Right ventricle myocardium inferior (tissue), 1 donor: ENCODE measurements at regions of chr9 and their contacts with region 1.

Region 1: GRCh38 chr9:132575005-132575609 is 7.3 kb upstream of the BARHL1 start:
- DNase-seq: no peak
- ATAC-seq: peak; percentile 69

Region 2: DNA sequence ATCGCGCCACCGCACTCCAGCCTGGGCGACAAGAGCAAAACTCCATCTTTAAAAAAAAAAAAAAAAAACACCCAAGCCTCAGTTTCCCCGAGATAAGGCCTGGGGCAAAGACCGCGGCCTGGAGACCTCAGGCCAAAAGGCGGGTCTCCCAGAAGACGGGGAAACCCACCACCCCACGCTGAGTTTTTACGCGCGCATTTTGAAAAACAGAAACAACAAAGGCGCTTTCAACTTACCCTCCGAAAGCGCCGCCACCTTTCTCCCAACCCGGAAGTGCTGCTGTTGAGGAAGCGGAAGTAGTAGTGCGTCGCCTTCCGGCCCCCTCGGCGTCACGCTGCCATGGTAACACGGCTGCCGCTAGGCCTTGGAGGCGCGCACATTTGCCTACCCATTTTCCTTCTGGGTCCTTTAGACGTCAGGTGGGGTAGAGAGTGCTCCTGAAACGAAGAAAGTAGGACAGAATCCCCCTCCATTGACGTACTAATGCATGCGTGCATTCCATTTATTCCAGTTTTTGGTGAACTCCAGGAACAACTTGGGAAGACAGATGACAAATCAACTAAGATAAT is 168.5 kb before region 1 on chr9 and contains the start of gene TTF1:
- intact Hi-C with region 1: loop called (anchors 2 kb)
- DNase-seq: peak; percentile 95
- ATAC-seq: peak; percentile 77
- total RNA-seq, gene TTF1: 17.2 TPM

Region 3: DNA sequence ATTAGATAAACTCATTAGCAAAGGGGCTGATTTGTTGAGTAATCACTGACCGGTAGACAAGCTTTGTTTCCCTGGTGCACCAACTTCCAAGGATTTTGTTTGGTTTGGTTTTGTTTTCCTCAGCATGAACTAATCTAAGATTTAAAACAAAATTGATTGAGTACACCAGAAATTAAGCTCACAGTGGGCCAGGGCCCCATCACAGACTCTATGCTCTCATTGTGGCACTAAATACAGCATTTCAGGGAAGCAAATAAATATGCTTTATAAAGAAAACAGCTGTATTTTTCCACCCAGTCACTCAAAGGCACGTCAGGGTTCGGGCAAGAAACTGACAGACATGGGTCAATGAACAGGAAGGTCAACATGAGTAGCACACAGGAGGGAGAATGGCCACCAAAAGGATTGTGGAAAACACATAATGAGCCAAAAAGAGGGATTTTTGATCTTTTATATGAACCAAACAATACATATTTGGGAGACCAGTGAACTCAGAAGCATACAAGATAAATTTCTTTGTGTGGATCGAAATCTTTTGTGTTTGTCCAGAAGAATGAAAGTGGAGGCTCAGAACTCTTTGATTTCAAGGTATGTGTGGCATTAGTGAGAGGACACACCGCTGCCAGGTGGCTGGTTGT is 156.3 kb before region 1 on chr9:
- intact Hi-C with region 1: loop called (anchors 2 kb)
- DNase-seq: no peak
- ATAC-seq: no peak

Region 4: GRCh38 chr9:132507746-132508469 is 67.2 kb before region 1 on chr9:
- intact Hi-C with region 1: loop called (anchors 1 kb)
- DNase-seq: no peak
- ATAC-seq: peak; percentile 61